ENCODE measurements at regions of chr6 and their contacts with region 1.

Region 1: DNA sequence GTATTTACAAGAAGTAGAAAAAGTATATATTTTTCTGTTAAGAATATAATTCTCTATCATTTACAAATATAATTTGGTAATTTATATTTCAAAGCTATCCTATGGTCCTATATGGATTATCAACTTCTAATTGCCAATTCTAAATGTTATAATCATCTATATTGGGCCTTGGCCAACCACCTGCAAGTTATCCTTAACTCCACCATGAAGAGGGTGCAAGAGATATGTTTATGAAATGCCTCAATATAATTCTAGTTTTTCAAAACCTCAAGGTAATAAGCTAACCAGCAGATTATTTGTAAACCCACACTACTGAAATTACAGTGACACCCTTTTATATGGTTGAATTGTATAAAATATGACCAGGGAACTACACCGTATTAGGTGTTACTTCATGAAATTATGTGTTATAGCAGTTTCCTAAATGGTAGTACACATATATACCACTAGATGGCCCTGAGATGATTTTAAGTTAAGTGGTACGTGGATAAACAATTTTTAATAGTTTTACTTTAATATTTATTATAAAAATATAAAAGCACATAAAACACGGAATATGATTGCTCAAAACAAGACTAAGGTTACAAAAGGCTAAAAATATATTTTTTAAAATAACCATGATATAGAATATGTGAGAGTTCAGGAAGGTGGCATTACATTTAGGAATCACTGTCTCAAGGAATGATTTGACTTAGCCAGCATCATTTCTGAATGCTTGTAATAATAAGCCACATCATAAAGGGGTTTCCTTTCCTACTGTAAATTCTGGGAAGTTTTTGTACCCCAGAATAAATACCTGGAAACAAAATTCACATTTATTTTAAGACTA is 9.8 kb upstream of the PNISR start:
- DNase-seq: no peak
- ATAC-seq: peak; percentile 33 to 44
- H3K4me3 ChIP-seq: no peak overlapping the region
- H3K27ac ChIP-seq: no peak overlapping the region
- H3K4me1 ChIP-seq: no peaks in the 10 kb centered on the region
- H3K27me3 ChIP-seq: no peaks in the 10 kb centered on the region

Region 2: DNA sequence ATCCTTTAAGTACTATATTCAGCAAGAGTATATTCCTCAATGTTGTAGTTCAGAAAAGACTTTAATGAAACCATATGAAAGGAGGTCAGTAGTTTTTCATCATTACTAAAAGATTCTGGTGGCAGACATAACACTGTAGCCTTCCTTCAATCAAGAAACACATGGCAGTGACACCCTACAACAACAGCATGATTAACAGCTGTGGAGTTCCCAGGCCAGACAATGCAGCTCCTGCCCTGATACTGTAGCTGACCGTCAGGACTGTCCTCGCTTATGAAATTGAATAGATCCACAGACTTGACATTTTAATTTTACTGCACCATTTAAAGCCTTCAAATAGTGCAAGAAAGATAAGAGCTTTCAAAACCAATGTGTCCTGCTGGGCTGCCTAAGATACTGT is 36.7 kb after region 1 on chr6:
- intact Hi-C with region 1: no loop called
- DNase-seq: no peak
- ATAC-seq: no peak
- H3K4me3 ChIP-seq: no peak overlapping the region
- H3K27ac ChIP-seq: no peak overlapping the region
- H3K4me1 ChIP-seq: no peaks in the 10 kb centered on the region
- H3K27me3 ChIP-seq: no peaks in the 10 kb centered on the region

Region 3: GRCh38 chr6:99520855-99521632 is 86.1 kb after region 1 on chr6:
- intact Hi-C with region 1: loop called in 1 of 4 experiments (anchors 10 kb)
- DNase-seq: peak; percentile 86 to 95 (median 94)
- ATAC-seq: peak; percentile 98
- H3K4me3 ChIP-seq: peak overlapping the region; percentile 92
- H3K27ac ChIP-seq: peak overlapping the region; percentile 69
- H3K4me1 ChIP-seq: no peaks in the 10 kb centered on the region
- H3K27me3 ChIP-seq: no peaks in the 10 kb centered on the region